GM12878 (cell line): ENCODE measurements at regions of chr2 and their contacts with region 1.

Region 1: DNA sequence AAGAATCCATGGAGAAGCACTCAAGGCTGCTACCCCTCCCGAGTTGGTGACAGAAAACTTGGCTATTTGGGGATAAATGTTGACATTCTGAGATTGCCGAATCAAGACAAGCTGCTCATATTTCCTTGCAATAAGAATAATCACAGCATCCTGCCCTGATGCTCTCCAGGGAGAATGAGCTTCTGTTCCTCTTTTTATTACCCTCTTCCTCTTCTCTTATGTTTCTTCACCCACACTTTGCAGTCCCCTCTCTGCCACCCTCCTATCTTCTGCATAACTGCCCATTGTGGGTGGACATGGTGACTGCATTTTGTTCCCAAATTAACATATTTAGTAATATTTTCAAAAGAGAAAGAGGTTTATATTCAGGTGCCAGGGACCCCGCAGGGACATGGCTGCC is 11.9 kb upstream of the MSGN1 start:
- DNase-seq: no peak
- ATAC-seq: peak; percentile 80
- H3K4me3 ChIP-seq: peak overlapping the region; percentile 22
- H3K27ac ChIP-seq: peak overlapping the region; percentile 41
- H3K4me1 ChIP-seq: peaks cover 24% of the 10 kb centered on the region
- H3K27me3 ChIP-seq: no peaks in the 10 kb centered on the region
- CTCF ChIP-seq: no peak
- EP300 ChIP-seq: peak in 1 of 2 experiments; percentile 88; a peak in 2 of 4 replicates
- POLR2A ChIP-seq: no peak
- RAD21 ChIP-seq: no peak

Region 2: DNA sequence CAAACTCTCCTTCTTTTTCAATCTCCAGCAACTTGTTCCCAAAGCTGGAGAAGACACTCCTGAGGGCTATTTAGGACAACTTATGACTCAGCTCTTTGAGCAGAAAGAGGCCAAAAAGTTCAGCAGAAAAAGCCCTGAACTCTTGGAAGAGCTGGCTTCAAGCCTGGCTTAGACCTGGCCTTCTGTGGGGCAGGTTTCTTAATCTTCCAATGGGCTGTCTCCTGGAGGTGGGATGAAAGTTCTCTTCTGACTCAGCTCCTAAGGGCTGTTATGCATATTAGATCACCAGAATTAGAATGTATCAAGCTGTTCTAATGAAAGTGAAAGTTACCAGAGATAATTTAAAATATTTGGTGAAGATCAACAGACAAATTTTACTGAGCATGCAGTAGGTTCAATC is 415.6 kb before region 1 on chr2:
- CTCF ChIA-PET with region 1: no interaction called
- POLR2A ChIA-PET with region 1: no interaction called
- RAD21 ChIA-PET with region 1: no interaction called
- SMC1A ChIA-PET with region 1: no interaction called
- in situ Hi-C with region 1: no loop called
- intact Hi-C with region 1: no loop called
- DNase-seq: no peak
- ATAC-seq: no peak
- H3K4me3 ChIP-seq: no peak overlapping the region
- H3K27ac ChIP-seq: no peak overlapping the region
- H3K4me1 ChIP-seq: no peaks in the 10 kb centered on the region
- H3K27me3 ChIP-seq: no peaks in the 10 kb centered on the region
- CTCF ChIP-seq: no peak
- EP300 ChIP-seq: no peak
- POLR2A ChIP-seq: no peak
- RAD21 ChIP-seq: no peak

Region 3: GRCh38 chr2:17646081-17646554 is 158.2 kb before region 1 on chr2:
- CTCF ChIA-PET with region 1: no interaction called
- POLR2A ChIA-PET with region 1: no interaction called
- RAD21 ChIA-PET with region 1: no interaction called
- SMC1A ChIA-PET with region 1: no interaction called
- in situ Hi-C with region 1: no loop called
- intact Hi-C with region 1: no loop called
- DNase-seq: peak; percentile 45
- ATAC-seq: peak; percentile 88
- H3K4me3 ChIP-seq: no peak overlapping the region
- H3K27ac ChIP-seq: no peak overlapping the region
- H3K4me1 ChIP-seq: peaks cover 3% of the 10 kb centered on the region
- H3K27me3 ChIP-seq: no peaks in the 10 kb centered on the region
- CTCF ChIP-seq: peak; percentile 75 to 88 (median 87); a peak in 4 of 6 replicates
- EP300 ChIP-seq: 0 out of 4 replicates have a peak, but pooled peaks of 1 of the 2 experiments have one; percentile 15
- POLR2A ChIP-seq: no peak
- RAD21 ChIP-seq: peak; percentile 79

Region 4: DNA sequence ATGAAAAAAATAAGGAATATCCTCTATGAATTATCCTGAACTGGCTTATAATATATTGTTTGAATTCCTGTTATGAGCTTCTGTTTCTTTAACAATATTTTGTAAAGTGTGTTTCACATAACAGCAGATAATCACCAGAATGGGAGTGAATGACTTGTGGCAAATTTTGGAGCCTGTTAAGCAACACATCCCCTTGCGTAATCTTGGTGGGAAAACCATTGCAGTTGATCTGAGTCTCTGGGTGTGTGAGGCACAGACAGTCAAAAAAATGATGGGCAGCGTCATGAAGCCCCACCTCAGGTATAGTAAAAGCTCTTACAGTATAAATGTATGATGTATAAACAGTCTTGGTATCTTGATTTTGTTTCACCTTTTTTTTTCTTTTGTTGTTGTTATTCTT is 44.6 kb before region 1 on chr2:
- CTCF ChIA-PET with region 1: interaction called, 8 read pairs
- POLR2A ChIA-PET with region 1: interaction called, 13 read pairs
- RAD21 ChIA-PET with region 1: interaction called, 16 read pairs
- SMC1A ChIA-PET with region 1: interaction called, 14 read pairs
- in situ Hi-C with region 1: no loop called
- intact Hi-C with region 1: no loop called
- DNase-seq: no peak
- ATAC-seq: no peak
- H3K4me3 ChIP-seq: no peak overlapping the region
- H3K27ac ChIP-seq: no peak overlapping the region
- H3K4me1 ChIP-seq: 0 out of 2 replicates have a peak, but pooled peaks cover 3% of the 10 kb centered on the region
- H3K27me3 ChIP-seq: no peaks in the 10 kb centered on the region
- CTCF ChIP-seq: no peak
- EP300 ChIP-seq: no peak
- POLR2A ChIP-seq: no peak
- RAD21 ChIP-seq: no peak

Region 5: DNA sequence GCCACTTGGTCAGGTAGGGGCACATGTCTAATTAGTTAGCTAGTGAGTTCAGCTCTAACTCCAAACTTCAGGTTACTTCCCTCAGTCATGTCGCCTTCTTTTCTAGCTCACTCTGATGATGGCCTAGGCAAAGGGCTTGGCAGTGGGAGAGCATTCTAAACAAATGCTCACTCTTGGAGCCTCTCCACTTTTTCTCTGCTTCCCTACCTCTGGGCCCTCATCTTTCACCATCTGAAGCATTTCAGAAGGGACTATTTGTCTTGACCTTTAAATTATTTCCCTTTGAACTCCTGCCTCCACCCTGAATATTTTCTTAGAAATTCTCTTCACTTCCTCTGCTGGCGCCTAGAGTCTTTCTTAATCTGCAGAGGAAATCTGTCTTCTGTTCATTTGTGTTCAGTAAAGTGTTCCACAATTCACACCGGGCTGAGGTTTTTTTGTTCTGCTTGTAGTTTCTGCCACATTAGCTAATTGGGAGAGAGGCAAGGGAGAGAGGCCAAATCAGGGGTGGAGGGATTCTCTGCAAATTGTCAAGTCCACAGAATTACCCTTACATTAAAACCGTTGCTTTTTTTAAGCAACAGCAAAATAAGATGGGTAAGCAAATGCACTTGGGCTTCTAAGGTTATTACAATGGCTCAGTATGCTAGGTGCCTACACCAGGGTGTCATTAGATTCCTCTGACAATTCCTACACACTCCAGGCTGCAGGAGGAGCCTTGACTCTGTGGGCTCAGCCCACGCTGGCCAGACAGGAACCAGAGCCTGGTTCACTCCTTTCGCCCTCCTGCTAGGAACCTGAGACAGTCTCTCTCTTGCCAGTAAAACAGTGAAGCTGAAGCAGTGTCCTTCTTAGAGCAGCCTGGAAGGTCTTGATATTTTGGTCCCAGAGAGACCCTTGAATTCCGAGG is 17.4 kb after region 1 on chr2:
- CTCF ChIA-PET with region 1: interaction called, 77 read pairs
- POLR2A ChIA-PET with region 1: interaction called, 108 read pairs
- RAD21 ChIA-PET with region 1: interaction called, 96 read pairs
- SMC1A ChIA-PET with region 1: interaction called, 288 read pairs
- in situ Hi-C with region 1: no loop called
- intact Hi-C with region 1: no loop called
- DNase-seq: no peak
- ATAC-seq: peak; percentile 65
- H3K4me3 ChIP-seq: 0 out of 2 replicates have a peak overlapping the region, but pooled peaks have one; percentile 48
- H3K27ac ChIP-seq: peak overlapping the region; percentile 55
- H3K4me1 ChIP-seq: peaks cover 29% of the 10 kb centered on the region
- H3K27me3 ChIP-seq: no peaks in the 10 kb centered on the region
- CTCF ChIP-seq: no peak
- EP300 ChIP-seq: peak; percentile 37 to 40; a peak in 1 of 4 replicates
- POLR2A ChIP-seq: no peak
- RAD21 ChIP-seq: no peak; the same call in 1 of the 2 replicates